CD8-positive, alpha-beta memory T cell (primary cell): ENCODE measurements at regions of chr20 and their contacts with region 1.

Region 1: GRCh38 chr20:36562724-36563123 is 10.7 kb upstream of the TGIF2 start:
- DNase-seq: no peak
- H3K4me3 ChIP-seq: no peak overlapping the region
- H3K4me3 Mint-ChIP-seq: no peak overlapping the region
- H3K27ac ChIP-seq: no peak overlapping the region
- H3K27ac Mint-ChIP-seq: peak overlapping the region in 2 of 8 donors; percentile 28 to 68
- H3K4me1 ChIP-seq: peaks cover 7% of the 10 kb centered on the region
- H3K4me1 Mint-ChIP-seq: peaks cover 20 to 21% (median 21%) of the 10 kb centered on the region in 3 donors
- H3K27me3 ChIP-seq: no peaks in the 10 kb centered on the region
- H3K27me3 Mint-ChIP-seq: peaks cover 0 to 1% of the 10 kb centered on the region in 2 donors

Region 2: DNA sequence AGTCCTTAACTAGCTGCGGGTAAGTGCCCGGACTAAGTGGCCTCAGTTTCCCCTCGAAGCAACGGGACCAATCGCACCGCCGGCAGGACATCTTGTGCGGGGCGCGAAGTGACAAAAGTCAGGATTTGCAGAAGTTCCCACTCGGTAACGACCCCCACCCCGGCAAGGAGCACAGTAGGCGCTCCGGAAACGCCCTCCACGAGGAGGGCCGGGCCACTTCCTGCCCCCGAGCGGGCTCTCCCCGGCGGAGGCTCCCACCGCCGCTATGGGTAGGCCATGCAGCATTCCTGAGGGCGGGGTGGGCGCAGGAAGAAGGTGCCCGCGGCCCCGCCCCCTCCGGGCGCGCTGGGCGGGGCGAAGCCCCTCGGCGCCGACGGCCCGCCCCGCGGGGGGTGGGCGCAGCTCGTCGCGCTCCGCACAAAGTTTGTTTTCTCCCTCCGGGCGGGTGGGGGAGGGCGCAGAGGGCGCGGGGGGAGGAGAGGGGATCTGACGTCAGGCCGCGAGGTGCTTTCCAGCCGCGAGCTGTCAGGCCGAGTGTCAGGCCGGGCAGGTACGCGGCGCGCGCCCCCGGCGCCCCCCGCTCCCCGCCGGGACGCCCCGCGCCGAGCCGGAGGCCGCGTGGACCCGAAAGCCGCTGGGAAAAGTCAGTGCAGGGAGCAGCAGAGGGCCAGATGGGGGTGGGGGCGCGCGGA is 10.5 kb after region 1 on chr20 and contains the start of gene TGIF2:
- CTCF ChIA-PET with region 1: interaction called, 6 read pairs
- POLR2A ChIA-PET with region 1: interaction called, 10 read pairs
- DNase-seq: peak; percentile 85 to 96 (median 93)
- H3K4me3 ChIP-seq: peak within 1 kb of the TSS; percentile 66
- H3K4me3 Mint-ChIP-seq: peak within 1 kb of the TSS; percentile 90 to 96 (median 93)
- H3K27ac ChIP-seq: peak within 1 kb of the TSS; percentile 91
- H3K27ac Mint-ChIP-seq: peak within 1 kb of the TSS; percentile 97 to 100 (median 98)
- H3K4me1 ChIP-seq: peaks cover 33% of the 10 kb centered on the region
- H3K4me1 Mint-ChIP-seq: peaks cover 30 to 40% (median 37%) of the 10 kb centered on the region in 3 donors
- H3K27me3 ChIP-seq: no peaks in the 10 kb centered on the region
- H3K27me3 Mint-ChIP-seq: peaks cover 0 to 3% of the 10 kb centered on the region in 2 donors
- total RNA-seq, gene TGIF2: 46.1 to 49.8 TPM

Region 3: GRCh38 chr20:36620917-36621316 is 58.2 kb after region 1 on chr20:
- CTCF ChIA-PET with region 1: no interaction called
- POLR2A ChIA-PET with region 1: no interaction called
- DNase-seq: no peak
- H3K4me3 ChIP-seq: no peak overlapping the region
- H3K4me3 Mint-ChIP-seq: no peak overlapping the region
- H3K27ac ChIP-seq: no peak overlapping the region
- H3K27ac Mint-ChIP-seq: peak overlapping the region in 7 of 8 donors; percentile 30 to 86 (median 44)
- H3K4me1 ChIP-seq: peaks cover 13% of the 10 kb centered on the region
- H3K4me1 Mint-ChIP-seq: peaks cover 25 to 41% (median 27%) of the 10 kb centered on the region in 3 donors
- H3K27me3 ChIP-seq: no peaks in the 10 kb centered on the region
- H3K27me3 Mint-ChIP-seq: no peaks in the 10 kb centered on the region

Region 4: DNA sequence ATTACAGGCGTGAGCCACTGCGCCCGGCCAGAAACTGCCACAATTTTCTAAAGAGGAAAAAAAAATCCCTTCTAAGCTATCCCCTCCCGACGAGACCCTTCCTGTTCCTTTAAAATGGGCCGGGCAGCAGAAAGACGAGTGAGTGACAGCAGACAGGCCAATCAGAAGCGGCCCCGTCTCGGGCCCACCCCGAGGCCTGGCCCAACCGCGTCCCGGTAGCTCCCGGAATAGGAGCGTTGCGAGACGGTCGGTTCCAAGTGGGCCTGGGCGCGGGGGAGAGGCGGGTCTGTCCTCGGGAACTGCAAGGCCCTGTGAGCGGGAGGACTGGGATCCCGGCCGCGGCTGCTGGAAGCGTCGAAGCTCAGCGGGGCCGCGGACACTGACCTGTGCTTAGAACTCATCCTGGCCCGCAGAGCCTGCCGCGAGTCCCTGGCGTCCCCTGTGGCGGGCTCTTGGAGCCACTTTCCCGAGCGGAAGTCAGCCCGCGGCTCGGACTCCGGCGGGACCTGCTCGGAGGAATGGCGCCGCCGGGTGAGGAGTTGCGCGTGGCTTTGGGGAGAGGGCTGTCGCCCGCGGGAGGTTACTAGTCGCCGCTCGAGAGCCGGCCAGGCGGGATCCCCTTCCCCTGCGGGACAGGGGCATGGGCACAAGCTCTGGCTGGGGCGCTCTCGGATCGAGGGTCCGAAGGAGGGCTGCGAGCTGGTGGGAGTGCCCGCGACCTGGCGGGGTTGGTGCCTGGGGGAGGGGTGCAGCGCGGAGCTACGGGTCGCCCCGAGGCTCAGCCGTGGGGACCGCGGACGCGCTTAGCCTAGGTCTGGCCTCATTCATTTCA is 616.3 kb after region 1 on chr20 and contains the starts of genes MROH8 and RPN2:
- CTCF ChIA-PET with region 1: no interaction called
- POLR2A ChIA-PET with region 1: no interaction called
- DNase-seq: peak; percentile 92 to 95 (median 94)
- H3K4me3 ChIP-seq: peak within 1 kb of the TSS; percentile 83
- H3K4me3 Mint-ChIP-seq: peak within 1 kb of the TSS; percentile 95 to 99 (median 99)
- H3K27ac ChIP-seq: peak within 1 kb of the TSS; percentile 90
- H3K27ac Mint-ChIP-seq: peak within 1 kb of the TSS; percentile 95 to 100 (median 99)
- H3K4me1 ChIP-seq: peaks cover 32% of the 10 kb centered on the region
- H3K4me1 Mint-ChIP-seq: peaks cover 38 to 49% (median 47%) of the 10 kb centered on the region in 3 donors
- H3K27me3 ChIP-seq: no peaks in the 10 kb centered on the region
- H3K27me3 Mint-ChIP-seq: no peaks in the 10 kb centered on the region
- total RNA-seq, gene MROH8: 1.6 to 3.0 TPM
- total RNA-seq, gene RPN2: 155 to 164 TPM